Sigmoid colon (tissue), 7 donors: ENCODE measurements at regions of chr16 and their contacts with region 1.

Region 1: DNA sequence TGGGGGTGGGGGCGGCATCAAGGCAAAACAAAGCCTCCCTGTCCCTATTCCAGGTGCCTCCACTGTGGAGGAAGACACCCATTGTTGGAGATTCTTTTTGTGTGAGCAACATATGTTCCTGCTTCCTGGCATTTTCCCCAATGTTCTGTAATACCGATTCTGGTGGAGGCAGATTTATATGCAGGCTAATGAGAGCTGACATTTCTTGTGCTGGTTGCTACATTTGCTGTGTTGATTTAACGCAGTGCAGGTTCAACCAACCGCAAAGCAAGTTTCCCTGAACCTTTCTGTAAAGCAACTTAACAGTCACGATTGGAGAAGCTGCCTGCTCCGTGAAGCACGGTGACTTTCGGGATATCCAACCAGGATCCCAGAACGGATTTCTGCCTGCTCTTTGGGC is 260.5 kb downstream of the CBLN1 start:
- DNase-seq: peak; percentile 75
- H3K4me3 ChIP-seq: no peak overlapping the region
- H3K27ac ChIP-seq: peak overlapping the region in 3 of 4 donors; percentile 62 to 79 (median 69)
- H3K4me1 ChIP-seq: peaks cover 0 to 56% (median 48%) of the 10 kb centered on the region in 4 donors
- H3K27me3 ChIP-seq: no peaks in the 10 kb centered on the region
- CTCF ChIP-seq: no peak
- EP300 ChIP-seq: peak; percentile 14 to 88 (median 58)
- POLR2A ChIP-seq: no peak

Region 2: GRCh38 chr16:48999508-48999907 is 21.6 kb before region 1 on chr16:
- intact Hi-C with region 1: loop called (anchors 2 kb)
- DNase-seq: peak; percentile 76
- H3K4me3 ChIP-seq: no peak overlapping the region
- H3K27ac ChIP-seq: peak overlapping the region in 3 of 4 donors; percentile 73 to 88 (median 86)
- H3K4me1 ChIP-seq: peaks cover 0 to 57% (median 48%) of the 10 kb centered on the region in 4 donors
- H3K27me3 ChIP-seq: no peaks in the 10 kb centered on the region
- CTCF ChIP-seq: no peak
- EP300 ChIP-seq: peak in 2 of 4 donors; percentile 67 to 80
- POLR2A ChIP-seq: no peak

Region 3: DNA sequence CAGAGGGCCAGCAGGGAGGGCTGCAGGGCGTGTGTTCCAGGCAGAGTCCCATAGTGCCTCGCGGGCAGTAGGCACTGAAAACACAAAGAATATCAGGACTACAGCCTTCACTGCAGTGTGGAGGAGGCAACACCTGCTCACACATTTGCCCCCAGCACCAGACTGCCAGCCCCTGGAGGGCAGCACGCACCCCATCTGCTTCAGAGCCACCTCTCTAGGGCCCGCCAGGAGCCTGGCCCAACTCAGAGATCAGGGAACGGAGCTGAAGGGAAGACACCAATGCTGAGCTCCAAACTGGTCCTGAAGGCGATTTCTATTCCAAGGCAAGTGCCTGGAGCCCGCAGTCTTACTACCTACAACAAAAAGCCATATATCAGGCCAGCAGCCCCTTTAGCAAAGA is 704.5 kb after region 1 on chr16:
- intact Hi-C with region 1: no loop called
- DNase-seq: no peak
- H3K4me3 ChIP-seq: no peak overlapping the region
- H3K27ac ChIP-seq: no peak overlapping the region
- H3K4me1 ChIP-seq: peaks cover 0 to 11% (median 6%) of the 10 kb centered on the region in 4 donors
- H3K27me3 ChIP-seq: no peaks in the 10 kb centered on the region
- CTCF ChIP-seq: no peak
- EP300 ChIP-seq: no peak
- POLR2A ChIP-seq: no peak